MCF 10A (cell line): ENCODE measurements at regions of chr1 and their contacts with region 1.

Region 1: GRCh38 chr1:148388260-148389027 is 94.7 kb downstream of the PPIAL4G start:
- DNase-seq: peak; percentile 97
- H3K4me3 Mint-ChIP-seq: peak overlapping the region; percentile 88
- H3K27ac Mint-ChIP-seq: peak overlapping the region; percentile 100
- H3K4me1 Mint-ChIP-seq: peaks cover 13% of the 10 kb centered on the region
- H3K27me3 Mint-ChIP-seq: no peaks in the 10 kb centered on the region
- CTCF ChIP-seq: no peak

Region 2: DNA sequence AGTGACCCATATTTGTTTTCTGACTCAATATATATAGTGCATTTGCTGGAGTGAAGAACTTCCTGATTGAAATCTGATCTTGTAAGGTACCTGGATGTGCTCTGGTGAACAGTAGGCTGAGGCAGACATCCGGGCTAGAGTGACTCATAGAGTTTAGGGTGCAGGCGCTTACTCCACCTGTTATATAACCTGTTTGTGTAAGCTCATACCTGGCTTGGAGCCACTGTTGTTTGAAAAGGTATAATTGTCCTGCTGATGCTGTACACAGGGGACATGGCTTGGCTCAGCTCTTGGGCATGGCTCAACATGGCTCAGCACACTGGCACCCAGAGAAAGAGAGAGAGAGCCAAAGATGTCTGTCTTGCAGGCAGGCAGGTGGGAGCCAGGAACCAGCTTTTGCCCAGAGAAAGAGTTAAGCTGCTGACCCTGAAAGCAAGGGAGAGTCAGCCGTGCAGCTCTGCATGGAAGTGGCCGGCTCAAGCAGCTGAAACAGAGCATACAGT is 671.3 kb before region 1 on chr1:
- CTCF ChIA-PET with region 1: no interaction called
- POLR2A ChIA-PET with region 1: no interaction called
- intact Hi-C with region 1: no loop called
- DNase-seq: peak; percentile 88
- H3K4me3 Mint-ChIP-seq: no peak overlapping the region
- H3K27ac Mint-ChIP-seq: no peak overlapping the region
- H3K4me1 Mint-ChIP-seq: peaks cover 23% of the 10 kb centered on the region
- H3K27me3 Mint-ChIP-seq: peaks cover 15% of the 10 kb centered on the region
- CTCF ChIP-seq: no peak

Region 3: DNA sequence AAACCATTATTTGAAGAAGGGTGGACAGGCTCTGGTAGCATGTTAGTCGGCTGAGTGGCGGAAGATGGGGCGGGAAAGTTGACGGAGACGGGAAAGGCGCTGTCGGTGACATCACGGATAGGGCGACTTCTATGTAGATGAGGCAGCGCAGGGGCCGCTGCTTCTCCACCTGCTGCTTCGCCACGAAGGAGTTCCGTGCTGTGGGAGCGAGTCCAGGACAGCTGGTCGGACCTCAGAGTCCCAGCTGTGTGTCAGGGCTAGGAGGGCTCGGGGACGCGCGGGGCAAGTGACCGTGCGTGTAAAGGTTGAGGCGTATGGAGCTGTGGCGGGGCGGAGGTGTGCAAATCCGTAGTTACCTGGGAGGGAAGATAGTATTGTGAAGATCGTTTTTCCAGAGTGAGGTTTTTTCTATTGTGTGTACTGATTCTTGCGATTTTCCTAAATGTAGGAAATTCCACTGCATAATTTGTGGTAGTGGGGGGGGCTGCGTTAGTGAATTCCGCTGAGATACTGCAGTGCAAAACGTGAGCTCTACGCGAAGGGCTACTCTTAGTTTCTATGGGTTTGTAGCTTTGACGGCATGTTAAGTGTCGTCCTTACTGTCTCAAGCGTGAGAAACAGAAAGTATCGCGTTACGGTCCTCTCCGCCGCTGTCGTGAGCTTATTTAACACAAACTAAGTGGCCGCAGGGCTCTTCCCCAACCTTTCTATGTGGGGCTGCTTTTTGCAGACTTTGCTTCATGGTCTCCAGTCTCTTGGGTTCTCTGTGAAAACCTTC is 125.1 kb before region 1 on chr1:
- CTCF ChIA-PET with region 1: no interaction called
- POLR2A ChIA-PET with region 1: interaction called, 3 read pairs
- intact Hi-C with region 1: loop called (anchors 1 kb)
- DNase-seq: peak; percentile 99
- H3K4me3 Mint-ChIP-seq: peak overlapping the region; percentile 82
- H3K27ac Mint-ChIP-seq: peak overlapping the region; percentile 99
- H3K4me1 Mint-ChIP-seq: peaks cover 13% of the 10 kb centered on the region
- H3K27me3 Mint-ChIP-seq: no peaks in the 10 kb centered on the region
- CTCF ChIP-seq: no peak